MCF 10A (cell line): ENCODE measurements at regions of chr17 and their contacts with region 1.

Region 1: GRCh38 chr17:8118769-8119580 is 661 bp upstream of the ALOXE3 start:
- DNase-seq: peak; percentile 84
- H3K4me3 Mint-ChIP-seq: peak overlapping the region; percentile 77
- H3K27ac Mint-ChIP-seq: peak overlapping the region; percentile 98
- H3K4me1 Mint-ChIP-seq: peaks cover 32% of the 10 kb centered on the region
- H3K27me3 Mint-ChIP-seq: no peaks in the 10 kb centered on the region
- CTCF ChIP-seq: peak; percentile 87

Region 2: DNA sequence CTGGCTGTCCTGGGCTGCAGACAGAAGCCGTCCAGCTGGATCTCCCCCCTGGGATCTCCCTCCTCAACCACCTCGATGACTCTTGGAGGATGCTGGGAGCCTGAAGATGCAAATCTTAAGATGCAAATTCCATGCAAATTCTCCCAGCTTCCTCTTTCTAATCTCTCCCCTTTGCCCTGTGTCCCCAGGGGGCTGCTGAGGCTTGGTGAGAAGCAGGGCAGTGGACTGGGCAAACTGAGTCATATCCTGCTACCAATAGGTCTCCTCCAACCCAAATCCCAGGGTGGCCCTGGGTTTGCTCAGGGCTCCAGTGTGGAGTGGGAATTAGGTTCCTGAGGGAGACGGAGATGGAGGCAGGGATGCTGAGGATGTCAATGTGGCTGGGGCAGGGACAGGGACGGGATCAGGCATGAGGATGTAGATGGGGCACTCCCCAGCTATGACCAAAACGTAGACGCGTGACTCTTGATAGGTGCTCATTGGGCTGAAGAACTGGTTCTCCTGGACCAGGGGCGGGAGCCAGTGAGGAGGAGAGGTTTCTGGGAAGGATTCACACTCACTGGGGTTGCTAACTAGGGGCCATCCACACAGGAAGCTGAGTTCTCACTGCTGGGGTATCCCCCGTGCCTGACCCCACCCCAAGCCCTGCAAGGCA is 27.8 kb before region 1 on chr17:
- CTCF ChIA-PET with region 1: interaction called, 38 read pairs
- POLR2A ChIA-PET with region 1: interaction called, 15 read pairs
- intact Hi-C with region 1: loop called (anchors 1 kb)
- DNase-seq: no peak
- H3K4me3 Mint-ChIP-seq: no peak overlapping the region
- H3K27ac Mint-ChIP-seq: no peak overlapping the region
- H3K4me1 Mint-ChIP-seq: peaks cover 5% of the 10 kb centered on the region
- H3K27me3 Mint-ChIP-seq: peaks cover 13% of the 10 kb centered on the region
- CTCF ChIP-seq: no peak

Region 3: GRCh38 chr17:8162233-8162996 is 43.4 kb after region 1 on chr17 and contains the start of gene VAMP2:
- CTCF ChIA-PET with region 1: interaction called, 16 read pairs
- POLR2A ChIA-PET with region 1: interaction called, 172 read pairs
- intact Hi-C with region 1: loop called (anchors 1 kb)
- DNase-seq: peak; percentile 55
- H3K4me3 Mint-ChIP-seq: peak within 1 kb of the TSS; percentile 78
- H3K27ac Mint-ChIP-seq: peak within 1 kb of the TSS; percentile 94
- H3K4me1 Mint-ChIP-seq: peaks cover 38% of the 10 kb centered on the region
- H3K27me3 Mint-ChIP-seq: no peaks in the 10 kb centered on the region
- CTCF ChIP-seq: no peak
- total RNA-seq, gene VAMP2: 37.7 and 42.8 TPM in 2 replicates

Region 4: DNA sequence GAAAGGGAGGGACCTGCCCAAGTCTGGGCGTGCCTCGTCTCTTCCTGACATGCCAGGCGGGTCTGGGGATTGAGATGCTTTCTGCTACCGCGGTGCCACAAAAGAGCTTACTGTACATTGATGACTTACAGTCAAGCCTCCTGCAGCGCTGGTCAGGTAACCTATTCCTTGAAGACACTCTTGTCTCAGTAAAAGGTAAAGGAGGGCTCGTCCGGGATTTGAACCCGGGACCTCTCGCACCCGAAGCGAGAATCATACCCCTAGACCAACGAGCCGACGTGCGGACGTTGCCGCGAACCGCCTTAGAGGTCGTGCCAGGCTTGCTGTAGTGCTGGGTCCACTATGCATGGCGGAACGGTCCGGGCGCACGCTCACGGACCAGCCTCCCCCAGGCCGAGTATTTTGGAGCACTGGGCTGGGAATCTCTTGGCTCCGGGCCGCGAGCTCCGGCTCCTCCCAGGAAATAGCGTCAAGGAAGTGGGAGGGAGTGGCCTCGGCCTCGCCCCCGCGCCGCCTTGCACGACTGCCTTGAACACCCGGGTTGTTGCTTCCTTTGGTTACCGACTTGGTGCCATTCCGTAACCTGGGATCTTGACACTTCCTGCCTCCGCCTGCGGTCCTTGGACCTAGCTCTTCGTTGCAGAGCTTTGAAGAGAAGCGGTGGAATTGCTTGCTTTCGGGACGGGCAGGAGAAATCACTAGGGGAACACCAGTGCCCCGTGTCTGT is 103.8 kb after region 1 on chr17:
- CTCF ChIA-PET with region 1: interaction called, 4 read pairs
- POLR2A ChIA-PET with region 1: interaction called, 100 read pairs
- intact Hi-C with region 1: loop called (anchors 1 kb)
- DNase-seq: peak; percentile 94
- H3K4me3 Mint-ChIP-seq: peak overlapping the region; percentile 93
- H3K27ac Mint-ChIP-seq: peak overlapping the region; percentile 97
- H3K4me1 Mint-ChIP-seq: peaks cover 18% of the 10 kb centered on the region
- H3K27me3 Mint-ChIP-seq: no peaks in the 10 kb centered on the region
- CTCF ChIP-seq: no peak

Region 5: GRCh38 chr17:8300627-8301242 is 181.8 kb after region 1 on chr17:
- CTCF ChIA-PET with region 1: interaction called, 5 read pairs
- POLR2A ChIA-PET with region 1: interaction called, 12 read pairs
- intact Hi-C with region 1: loop called (anchors 1 kb)
- DNase-seq: peak; percentile 77
- H3K4me3 Mint-ChIP-seq: no peak overlapping the region
- H3K27ac Mint-ChIP-seq: no peak overlapping the region
- H3K4me1 Mint-ChIP-seq: peaks cover 13% of the 10 kb centered on the region
- H3K27me3 Mint-ChIP-seq: no peaks in the 10 kb centered on the region
- CTCF ChIP-seq: peak; percentile 72